ENCODE measurements at regions of chr11 and their contacts with region 1.

Region 1: DNA sequence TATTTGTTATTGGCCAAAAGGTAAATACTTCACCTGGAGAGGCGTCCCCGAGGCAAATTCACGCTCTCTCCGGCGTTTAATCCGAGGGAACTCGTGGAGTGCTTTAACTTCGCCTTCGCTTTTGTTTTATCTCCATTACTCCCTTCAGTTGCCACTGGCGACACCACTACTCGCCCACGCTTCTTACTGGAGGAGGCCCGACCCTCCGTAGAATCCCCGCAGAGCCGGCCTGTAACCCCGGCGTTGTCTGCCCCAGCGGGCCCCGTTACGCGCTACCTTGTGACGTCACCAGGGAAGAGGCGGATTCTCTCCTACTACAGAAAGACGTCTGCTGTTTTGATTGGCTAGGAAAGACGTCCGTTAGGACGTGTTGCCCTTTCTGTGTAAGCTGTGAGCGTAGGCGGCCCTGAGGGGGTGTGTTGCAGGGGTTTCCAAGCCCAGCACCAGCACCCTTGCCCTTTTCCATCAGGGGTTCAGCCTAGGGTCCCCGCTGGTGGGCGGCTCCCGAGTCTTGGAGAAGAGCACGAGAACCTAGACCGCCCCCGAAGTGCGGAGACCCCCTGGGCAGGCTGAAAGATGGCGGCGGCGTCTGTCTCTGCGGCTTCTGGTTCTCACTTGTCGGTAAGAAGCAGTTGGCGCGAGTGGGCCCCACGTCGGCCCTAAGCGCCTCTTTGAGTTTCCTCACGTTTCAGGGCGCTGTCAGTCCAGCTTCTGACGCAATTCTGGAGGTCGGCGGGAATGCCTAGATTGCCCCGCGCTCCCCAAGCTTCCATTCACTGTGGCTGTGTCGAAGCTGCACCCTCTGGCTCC is at the start of gene CEP57:
- DNase-seq: peak; percentile 82
- H3K4me3 ChIP-seq: peak within 1 kb of the TSS; percentile 88
- H3K27me3 ChIP-seq: no peaks in the 10 kb centered on the region
- CTCF ChIP-seq: no peak
- polyA plus RNA-seq, gene CEP57: 18.3 and 27.9 TPM in 2 replicates

Region 2: DNA sequence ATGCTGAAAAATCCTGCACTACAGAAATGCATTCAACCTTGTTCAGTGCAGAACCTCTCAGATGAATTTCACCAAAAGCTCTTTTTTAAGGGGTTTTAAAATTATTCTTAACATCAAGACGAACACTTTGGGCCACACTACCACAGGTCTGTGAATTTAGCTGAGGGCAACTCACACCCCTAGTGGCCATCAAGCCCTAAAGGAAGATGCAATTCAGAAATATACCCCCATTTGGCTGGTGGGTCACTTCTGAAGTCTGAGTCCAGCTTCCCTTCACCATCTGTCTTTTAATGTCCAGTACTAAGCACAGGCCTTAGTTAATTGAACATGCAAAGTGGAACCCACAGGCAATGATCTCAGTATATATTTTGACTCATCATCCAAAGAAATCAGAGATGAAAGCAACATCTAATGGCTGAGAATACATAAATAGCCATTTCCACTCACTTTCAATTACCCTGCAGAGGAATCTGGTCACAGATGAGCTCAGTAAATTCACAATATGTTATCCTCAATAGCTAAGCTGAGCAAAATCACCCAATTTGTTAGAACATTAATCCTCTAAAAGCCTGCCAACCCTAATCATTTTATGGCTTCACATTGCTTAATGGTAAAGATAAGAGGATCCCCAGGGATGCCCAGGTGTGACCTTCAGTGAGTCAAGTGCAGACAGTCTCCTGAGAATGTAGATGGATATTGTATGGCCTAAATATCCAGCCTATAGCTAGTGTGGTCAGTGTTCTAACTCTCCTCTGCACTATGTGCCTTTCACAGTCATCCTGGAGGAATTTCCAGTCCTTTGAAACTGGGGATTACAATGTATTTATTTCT is 51.0 kb before region 1 on chr11:
- CTCF ChIA-PET with region 1: no interaction called
- POLR2A ChIA-PET with region 1: no interaction called
- DNase-seq: no peak
- H3K4me3 ChIP-seq: no peak overlapping the region
- H3K27me3 ChIP-seq: peaks cover 4% of the 10 kb centered on the region
- CTCF ChIP-seq: no peak

Region 3: GRCh38 chr11:95764267-95764898 is 25.9 kb before region 1 on chr11:
- CTCF ChIA-PET with region 1: no interaction called
- POLR2A ChIA-PET with region 1: no interaction called
- DNase-seq: no peak
- H3K4me3 ChIP-seq: no peak overlapping the region
- H3K27me3 ChIP-seq: peaks cover 6% of the 10 kb centered on the region
- CTCF ChIP-seq: peak; percentile 58

Region 4: DNA sequence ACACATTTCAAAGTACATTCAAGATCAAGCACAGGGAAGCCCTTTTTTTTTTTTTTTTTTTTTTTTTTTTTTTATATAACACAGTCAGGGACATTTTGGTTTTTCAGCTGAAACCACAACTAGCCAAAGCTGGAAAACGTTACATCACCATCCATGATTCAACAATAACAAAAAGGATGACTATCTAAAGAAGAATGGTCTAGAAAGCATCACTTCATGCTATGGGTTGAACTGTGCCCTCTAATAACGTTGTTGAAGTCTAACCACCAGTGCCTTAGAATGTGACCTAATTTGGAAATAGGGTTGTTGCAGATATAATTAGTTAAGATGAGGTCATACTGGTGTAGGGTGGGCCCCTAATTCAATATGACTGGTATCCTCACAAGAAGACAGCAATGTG is 87.0 kb after region 1 on chr11:
- CTCF ChIA-PET with region 1: no interaction called
- POLR2A ChIA-PET with region 1: interaction called, 14 read pairs
- DNase-seq: peak; percentile 99
- H3K4me3 ChIP-seq: no peak overlapping the region
- H3K27me3 ChIP-seq: no peaks in the 10 kb centered on the region
- CTCF ChIP-seq: no peak

Measured in BJ (cell line).